CD4-positive, alpha-beta T cell (primary cell): ENCODE measurements at regions of chr7 and their contacts with region 1.

Region 1: GRCh38 chr7:142754681-142755575 is 5.7 kb downstream of the PRSS1 start:
- DNase-seq: no peak
- ATAC-seq: no peak
- H3K4me3 ChIP-seq: no peak overlapping the region
- H3K4me3 Mint-ChIP-seq: no peak overlapping the region
- H3K27ac ChIP-seq: no peak overlapping the region
- H3K27ac Mint-ChIP-seq: no peak overlapping the region
- H3K4me1 ChIP-seq: no peaks in the 10 kb centered on the region
- H3K4me1 Mint-ChIP-seq: no peaks in the 10 kb centered on the region
- H3K27me3 ChIP-seq: no peaks in the 10 kb centered on the region
- H3K27me3 Mint-ChIP-seq: no peaks in the 10 kb centered on the region
- CTCF ChIP-seq: no peak

Region 2: GRCh38 chr7:142771353-142771723 is 16.4 kb after region 1 on chr7:
- CTCF ChIA-PET with region 1: no interaction called
- POLR2A ChIA-PET with region 1: no interaction called
- intact Hi-C with region 1: loop called in 1 of 2 experiments (anchors 2 kb)
- DNase-seq: no peak
- ATAC-seq: no peak
- H3K4me3 ChIP-seq: no peak overlapping the region
- H3K4me3 Mint-ChIP-seq: no peak overlapping the region
- H3K27ac ChIP-seq: no peak overlapping the region
- H3K27ac Mint-ChIP-seq: no peak overlapping the region
- H3K4me1 ChIP-seq: no peaks in the 10 kb centered on the region
- H3K4me1 Mint-ChIP-seq: no peaks in the 10 kb centered on the region
- H3K27me3 ChIP-seq: no peaks in the 10 kb centered on the region
- H3K27me3 Mint-ChIP-seq: no peaks in the 10 kb centered on the region
- CTCF ChIP-seq: no peak

Region 3: DNA sequence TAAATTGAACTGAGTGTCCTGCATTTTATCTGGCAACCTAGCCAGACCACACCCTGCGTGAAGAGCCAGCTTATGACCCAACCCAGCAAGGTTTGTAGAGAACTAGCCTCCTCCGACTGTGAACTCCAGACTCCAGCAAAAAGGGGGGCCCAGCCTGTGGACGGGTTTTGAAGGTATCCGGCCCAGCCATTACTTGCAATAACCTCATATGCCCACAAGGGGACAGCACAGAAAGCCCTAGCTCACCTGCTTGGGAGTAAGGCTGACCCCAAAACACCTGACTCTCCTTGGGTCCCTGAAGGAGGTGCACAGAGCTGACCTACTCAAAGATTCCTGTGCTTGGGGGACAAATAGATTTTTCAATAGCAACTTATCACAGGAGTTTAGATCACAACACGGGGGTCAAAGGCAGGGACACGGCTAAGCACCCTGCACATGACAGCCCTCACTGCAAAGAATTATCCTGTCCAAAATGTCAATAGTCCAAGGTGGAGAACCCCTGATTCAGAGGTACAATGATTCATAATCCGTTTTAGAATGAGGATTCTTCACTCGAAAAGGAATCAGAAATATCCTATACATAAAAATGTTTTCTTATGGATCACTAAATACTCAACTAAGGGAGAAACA is 126.1 kb after region 1 on chr7:
- CTCF ChIA-PET with region 1: no interaction called
- POLR2A ChIA-PET with region 1: no interaction called
- intact Hi-C with region 1: no loop called
- DNase-seq: peak; percentile 23 to 75 (median 32)
- ATAC-seq: peak; percentile 84
- H3K4me3 ChIP-seq: no peak overlapping the region
- H3K4me3 Mint-ChIP-seq: no peak overlapping the region
- H3K27ac ChIP-seq: no peak overlapping the region
- H3K27ac Mint-ChIP-seq: no peak overlapping the region
- H3K4me1 ChIP-seq: no peaks in the 10 kb centered on the region
- H3K4me1 Mint-ChIP-seq: no peaks in the 10 kb centered on the region
- H3K27me3 ChIP-seq: no peaks in the 10 kb centered on the region
- H3K27me3 Mint-ChIP-seq: peaks cover 5% of the 10 kb centered on the region
- CTCF ChIP-seq: peak; percentile 83